IMR-90 (cell line): ENCODE measurements at regions of chr4 and their contacts with region 1.

Region 1: DNA sequence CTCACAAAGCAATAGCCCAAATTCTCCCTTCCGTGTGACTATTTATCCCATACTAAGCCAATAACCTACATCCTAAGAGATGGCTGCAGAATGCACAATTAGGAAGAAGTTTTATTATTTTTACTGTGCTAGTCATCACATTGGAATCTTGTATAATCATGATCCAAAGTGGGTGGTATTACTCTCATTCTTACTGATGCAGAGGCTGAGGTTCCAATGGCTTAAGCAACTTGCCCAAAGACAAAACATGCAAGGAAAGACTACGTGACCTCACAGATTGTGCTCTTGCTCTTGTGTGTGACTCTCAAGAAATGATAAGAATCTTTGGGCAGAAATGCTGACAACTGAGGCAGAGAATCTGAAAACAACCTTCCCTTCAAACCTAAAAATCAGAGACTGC is 212.2 kb downstream of the LDB2 start:
- DNase-seq: peak; percentile 97
- ATAC-seq: peak; percentile 88
- H3K4me3 ChIP-seq: no peak overlapping the region
- H3K27ac ChIP-seq: peak overlapping the region; percentile 91; the same call in 1 of the 2 replicates
- H3K4me1 ChIP-seq: peaks cover 20% of the 10 kb centered on the region
- H3K27me3 ChIP-seq: no peaks in the 10 kb centered on the region
- CTCF ChIP-seq: no peak
- POLR2A ChIP-seq: peak; percentile 39; the same call in 1 of the 2 replicates
- RAD21 ChIP-seq: no peak

Region 2: GRCh38 chr4:16532240-16532970 is 153.8 kb before region 1 on chr4:
- CTCF ChIA-PET with region 1: no interaction called
- POLR2A ChIA-PET with region 1: no interaction called
- dilution Hi-C with region 1: no loop called
- in situ Hi-C with region 1: no loop called
- intact Hi-C with region 1: loop called (anchors 5 kb)
- DNase-seq: peak; percentile 91
- ATAC-seq: peak; percentile 79
- H3K4me3 ChIP-seq: no peak overlapping the region
- H3K27ac ChIP-seq: 0 out of 2 replicates have a peak overlapping the region, but pooled peaks have one; percentile 9
- H3K4me1 ChIP-seq: peaks cover 12% of the 10 kb centered on the region
- H3K27me3 ChIP-seq: no peaks in the 10 kb centered on the region
- CTCF ChIP-seq: no peak
- POLR2A ChIP-seq: no peak
- RAD21 ChIP-seq: no peak

Region 3: DNA sequence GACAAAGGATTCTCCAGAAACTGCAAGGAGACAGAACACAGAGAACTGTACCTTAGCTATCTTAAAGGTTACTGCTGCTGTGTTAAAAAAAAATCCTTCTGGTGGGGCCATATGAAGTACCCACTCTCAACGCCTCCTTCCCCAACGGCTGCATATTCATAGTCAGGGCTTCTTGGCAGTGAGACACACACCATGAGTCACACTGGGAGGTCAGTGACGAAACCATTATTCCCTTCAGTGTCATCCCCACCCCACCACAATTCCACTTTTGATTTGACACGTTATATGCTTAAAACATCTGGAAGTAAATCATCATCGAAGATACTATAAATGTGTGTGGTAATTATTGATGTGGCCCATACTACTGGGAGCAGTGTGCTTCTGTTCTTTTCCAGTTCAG is 59.2 kb before region 1 on chr4:
- CTCF ChIA-PET with region 1: no interaction called
- POLR2A ChIA-PET with region 1: interaction called, 3 read pairs
- dilution Hi-C with region 1: no loop called
- in situ Hi-C with region 1: no loop called
- intact Hi-C with region 1: loop called (anchors 2 kb)
- DNase-seq: peak; percentile 98
- ATAC-seq: peak; percentile 86
- H3K4me3 ChIP-seq: no peak overlapping the region
- H3K27ac ChIP-seq: peak overlapping the region; percentile 77; the same call in 1 of the 2 replicates
- H3K4me1 ChIP-seq: peaks cover 20% of the 10 kb centered on the region
- H3K27me3 ChIP-seq: no peaks in the 10 kb centered on the region
- CTCF ChIP-seq: no peak
- POLR2A ChIP-seq: no peak
- RAD21 ChIP-seq: peak; percentile 12; the same call in 1 of the 2 replicates